ENCODE measurements at regions of chr4 and their contacts with region 1.

Region 1: GRCh38 chr4:96035727-96036126 is 195.8 kb downstream of the PDHA2 start:
- DNase-seq: peak; percentile 39
- H3K4me3 ChIP-seq: no peak overlapping the region
- H3K27ac ChIP-seq: no peak overlapping the region
- H3K4me1 ChIP-seq: no peaks in the 10 kb centered on the region
- H3K27me3 ChIP-seq: no peaks in the 10 kb centered on the region
- CTCF ChIP-seq: peak; percentile 43 to 70

Region 2: GRCh38 chr4:94757192-94758139 is 1278.3 kb before region 1 on chr4 and contains the start of gene BMPR1B:
- CTCF ChIA-PET with region 1: interaction called, 10 read pairs
- dilution Hi-C with region 1: no loop called
- in situ Hi-C with region 1: no loop called
- intact Hi-C with region 1: no loop called
- DNase-seq: peak; percentile 65
- H3K4me3 ChIP-seq: peak within 1 kb of the TSS; percentile 68 to 80 (median 70)
- H3K27ac ChIP-seq: peak within 1 kb of the TSS; percentile 7
- H3K4me1 ChIP-seq: no peaks in the 10 kb centered on the region
- H3K27me3 ChIP-seq: peaks cover 1% of the 10 kb centered on the region
- CTCF ChIP-seq: peak in 1 of 2 donors; percentile 45
- total RNA-seq, gene BMPR1B: 1.7 to 11.3 TPM

Region 3: DNA sequence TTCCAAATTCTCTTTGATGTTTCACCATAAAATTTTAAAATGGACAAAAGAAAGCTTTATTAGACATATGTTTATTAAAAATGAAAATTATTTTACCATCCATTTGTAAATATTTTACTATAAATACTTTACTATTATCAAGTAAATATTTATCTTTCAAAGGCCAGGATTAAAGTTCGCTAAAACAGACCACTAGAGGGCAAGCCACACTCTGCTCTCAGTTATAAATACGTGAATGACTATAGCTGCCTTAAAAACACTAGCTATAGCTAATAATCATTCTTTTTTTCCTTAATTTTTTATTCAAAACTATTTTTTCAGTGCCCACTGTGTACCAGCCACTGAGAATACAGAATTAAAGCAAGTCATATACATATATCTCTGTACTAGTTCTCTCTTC is 525.6 kb before region 1 on chr4:
- CTCF ChIA-PET with region 1: no interaction called
- dilution Hi-C with region 1: no loop called
- in situ Hi-C with region 1: no loop called
- intact Hi-C with region 1: loop called (anchors 2 kb)
- DNase-seq: peak; percentile 22
- H3K4me3 ChIP-seq: peak overlapping the region in 1 of 3 experiments; percentile 20
- H3K27ac ChIP-seq: peak overlapping the region; percentile 4
- H3K4me1 ChIP-seq: peaks cover 39% of the 10 kb centered on the region
- H3K27me3 ChIP-seq: no peaks in the 10 kb centered on the region
- CTCF ChIP-seq: peak; percentile 70 to 75

Region 4: DNA sequence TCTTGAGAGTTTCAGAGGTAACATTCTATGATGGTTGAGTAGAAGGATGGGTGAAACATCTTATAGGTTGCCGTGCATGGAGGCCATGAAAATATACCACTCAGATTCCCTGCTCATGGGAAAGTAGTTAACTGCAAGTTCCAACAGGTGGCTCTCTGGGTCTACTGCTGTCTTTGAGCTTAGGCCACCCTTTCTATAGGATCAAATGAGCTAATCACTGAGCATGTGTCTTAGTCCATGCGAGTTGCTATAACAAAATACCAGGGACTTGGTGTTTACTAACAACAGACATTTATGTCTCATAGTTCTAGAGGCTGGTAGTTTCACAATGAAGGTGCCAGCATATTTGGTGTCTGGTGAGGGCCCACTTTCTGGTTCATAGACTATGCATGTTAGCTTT is 342.1 kb before region 1 on chr4:
- CTCF ChIA-PET with region 1: interaction called, 3 read pairs
- dilution Hi-C with region 1: no loop called
- in situ Hi-C with region 1: loop called in 1 of 2 experiments (anchors 25 kb)
- intact Hi-C with region 1: loop called (anchors 1 kb)
- DNase-seq: peak; percentile 48
- H3K4me3 ChIP-seq: no peak overlapping the region
- H3K27ac ChIP-seq: no peak overlapping the region
- H3K4me1 ChIP-seq: peaks cover 4% of the 10 kb centered on the region
- H3K27me3 ChIP-seq: no peaks in the 10 kb centered on the region
- CTCF ChIP-seq: peak; percentile 60 to 67

Region 5: GRCh38 chr4:95779447-95779846 is 256.3 kb before region 1 on chr4:
- CTCF ChIA-PET with region 1: interaction called, 11 read pairs
- dilution Hi-C with region 1: no loop called
- in situ Hi-C with region 1: no loop called
- intact Hi-C with region 1: no loop called
- DNase-seq: no peak
- H3K4me3 ChIP-seq: no peak overlapping the region
- H3K27ac ChIP-seq: no peak overlapping the region
- H3K4me1 ChIP-seq: no peaks in the 10 kb centered on the region
- H3K27me3 ChIP-seq: no peaks in the 10 kb centered on the region
- CTCF ChIP-seq: no peak

Region 6: DNA sequence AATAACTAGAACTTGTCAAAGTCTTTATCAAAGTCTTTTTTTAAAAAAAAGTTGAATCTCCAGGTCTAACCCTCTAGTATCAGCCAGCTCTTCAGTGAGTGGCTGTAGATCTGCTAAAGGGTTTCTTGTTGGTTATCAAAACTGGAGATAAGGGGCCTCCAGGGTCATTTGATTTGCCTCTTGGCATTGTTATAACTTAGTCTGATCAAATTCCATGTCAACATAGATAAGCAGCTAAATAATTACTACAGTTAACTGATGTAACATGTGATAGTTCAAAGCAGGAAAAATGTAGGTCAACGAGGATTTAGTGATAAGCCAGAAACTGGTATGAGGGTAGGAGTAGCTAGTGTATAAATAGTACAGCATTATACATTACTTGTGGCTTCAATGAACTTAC is 269.3 kb after region 1 on chr4:
- CTCF ChIA-PET with region 1: no interaction called
- dilution Hi-C with region 1: no loop called
- in situ Hi-C with region 1: no loop called
- intact Hi-C with region 1: no loop called
- DNase-seq: no peak
- H3K4me3 ChIP-seq: no peak overlapping the region
- H3K27ac ChIP-seq: no peak overlapping the region
- H3K4me1 ChIP-seq: no peaks in the 10 kb centered on the region
- H3K27me3 ChIP-seq: no peaks in the 10 kb centered on the region
- CTCF ChIP-seq: no peak

Measured in mammary epithelial cell (primary cell).